ENCODE measurements at regions of chr1 and their contacts with region 1.

Region 1: DNA sequence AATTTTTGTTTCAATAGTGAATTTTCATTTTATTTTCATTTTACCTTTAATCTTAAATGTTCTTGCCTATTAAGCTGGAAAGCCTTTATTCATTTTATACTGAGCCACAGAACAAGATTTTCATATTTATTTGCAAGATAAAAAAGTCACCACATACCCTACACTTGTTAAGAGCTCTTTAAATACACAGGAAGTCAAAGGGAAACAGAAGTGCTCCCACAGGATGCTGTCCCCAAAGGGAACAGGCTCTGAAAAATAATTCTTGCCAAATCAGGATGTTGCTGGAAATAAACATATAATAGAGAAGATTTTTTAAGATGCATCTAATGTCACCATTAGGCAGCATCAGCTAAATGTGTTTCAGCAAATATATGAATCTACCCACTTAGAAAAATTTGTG is 113.6 kb downstream of the VAV3 start:
- DNase-seq: no peak
- ATAC-seq: no peak
- H3K4me3 ChIP-seq: no peak overlapping the region
- H3K27ac ChIP-seq: no peak overlapping the region
- H3K4me1 ChIP-seq: no peaks in the 10 kb centered on the region
- H3K27me3 ChIP-seq: no peaks in the 10 kb centered on the region
- CTCF ChIP-seq: no peak
- POLR2A ChIP-seq: no peak
- RAD21 ChIP-seq: no peak

Region 2: GRCh38 chr1:107767156-107767582 is 84.2 kb before region 1 on chr1:
- CTCF ChIA-PET with region 1: no interaction called
- POLR2A ChIA-PET with region 1: no interaction called
- dilution Hi-C with region 1: no loop called
- in situ Hi-C with region 1: no loop called
- intact Hi-C with region 1: no loop called
- DNase-seq: no peak
- ATAC-seq: no peak
- H3K4me3 ChIP-seq: no peak overlapping the region
- H3K27ac ChIP-seq: no peak overlapping the region
- H3K4me1 ChIP-seq: no peaks in the 10 kb centered on the region
- H3K27me3 ChIP-seq: no peaks in the 10 kb centered on the region
- CTCF ChIP-seq: no peak
- POLR2A ChIP-seq: no peak
- RAD21 ChIP-seq: no peak

Region 3: GRCh38 chr1:108106775-108107174 is 255.4 kb after region 1 on chr1:
- CTCF ChIA-PET with region 1: no interaction called
- POLR2A ChIA-PET with region 1: interaction called, 11 read pairs
- dilution Hi-C with region 1: no loop called
- in situ Hi-C with region 1: no loop called
- intact Hi-C with region 1: no loop called
- DNase-seq: no peak
- ATAC-seq: no peak
- H3K4me3 ChIP-seq: no peak overlapping the region
- H3K27ac ChIP-seq: no peak overlapping the region
- H3K4me1 ChIP-seq: no peaks in the 10 kb centered on the region
- H3K27me3 ChIP-seq: no peaks in the 10 kb centered on the region; the same call in none of the 2 replicates
- CTCF ChIP-seq: no peak
- POLR2A ChIP-seq: no peak
- RAD21 ChIP-seq: no peak

Measured in IMR-90 (cell line).